ENCODE measurements at regions of chr4 and their contacts with region 1.

Region 1: DNA sequence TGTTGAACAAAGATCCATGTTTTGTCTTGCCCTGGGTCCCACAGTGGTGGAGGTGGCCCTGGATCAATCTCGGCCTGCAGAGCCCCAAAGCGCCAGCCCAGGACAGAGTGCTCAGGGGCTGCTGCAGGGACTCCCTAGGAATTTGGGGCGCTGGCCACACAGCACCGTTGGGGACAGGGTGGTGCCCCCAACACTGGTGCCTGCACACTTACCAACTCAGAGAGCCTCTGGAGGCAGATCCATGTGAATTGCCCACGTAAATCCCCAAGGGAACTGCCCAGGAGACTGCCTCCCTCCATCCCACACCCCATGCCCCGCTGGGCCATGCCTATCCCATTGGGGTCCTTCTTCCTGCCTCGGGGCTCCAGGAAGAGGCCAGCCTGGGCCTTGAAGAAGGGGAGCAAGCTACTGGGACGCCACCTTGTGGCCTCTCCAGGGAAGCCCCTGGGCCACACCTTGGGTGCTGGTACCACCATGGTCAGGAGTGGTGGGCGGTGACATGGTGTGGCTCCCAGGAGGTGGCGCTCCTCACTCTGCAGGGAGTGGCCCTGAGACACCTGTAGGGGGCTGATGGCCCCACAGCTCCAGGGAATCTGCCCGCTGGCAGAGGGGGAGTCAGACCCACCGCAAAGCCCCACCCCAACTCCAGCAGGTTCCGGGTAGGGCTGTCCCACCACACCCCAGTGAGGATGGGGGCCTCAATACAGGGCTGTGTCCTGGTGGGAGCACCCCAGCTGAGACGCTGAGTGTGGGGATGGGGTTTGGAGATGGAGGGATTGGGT is 22.8 kb downstream of the CFAP99 start:
- DNase-seq: peak; percentile 73
- H3K4me3 ChIP-seq: no peak overlapping the region
- H3K27ac ChIP-seq: no peak overlapping the region
- H3K4me1 ChIP-seq: no peaks in the 10 kb centered on the region
- H3K27me3 ChIP-seq: no peaks in the 10 kb centered on the region

Region 2: DNA sequence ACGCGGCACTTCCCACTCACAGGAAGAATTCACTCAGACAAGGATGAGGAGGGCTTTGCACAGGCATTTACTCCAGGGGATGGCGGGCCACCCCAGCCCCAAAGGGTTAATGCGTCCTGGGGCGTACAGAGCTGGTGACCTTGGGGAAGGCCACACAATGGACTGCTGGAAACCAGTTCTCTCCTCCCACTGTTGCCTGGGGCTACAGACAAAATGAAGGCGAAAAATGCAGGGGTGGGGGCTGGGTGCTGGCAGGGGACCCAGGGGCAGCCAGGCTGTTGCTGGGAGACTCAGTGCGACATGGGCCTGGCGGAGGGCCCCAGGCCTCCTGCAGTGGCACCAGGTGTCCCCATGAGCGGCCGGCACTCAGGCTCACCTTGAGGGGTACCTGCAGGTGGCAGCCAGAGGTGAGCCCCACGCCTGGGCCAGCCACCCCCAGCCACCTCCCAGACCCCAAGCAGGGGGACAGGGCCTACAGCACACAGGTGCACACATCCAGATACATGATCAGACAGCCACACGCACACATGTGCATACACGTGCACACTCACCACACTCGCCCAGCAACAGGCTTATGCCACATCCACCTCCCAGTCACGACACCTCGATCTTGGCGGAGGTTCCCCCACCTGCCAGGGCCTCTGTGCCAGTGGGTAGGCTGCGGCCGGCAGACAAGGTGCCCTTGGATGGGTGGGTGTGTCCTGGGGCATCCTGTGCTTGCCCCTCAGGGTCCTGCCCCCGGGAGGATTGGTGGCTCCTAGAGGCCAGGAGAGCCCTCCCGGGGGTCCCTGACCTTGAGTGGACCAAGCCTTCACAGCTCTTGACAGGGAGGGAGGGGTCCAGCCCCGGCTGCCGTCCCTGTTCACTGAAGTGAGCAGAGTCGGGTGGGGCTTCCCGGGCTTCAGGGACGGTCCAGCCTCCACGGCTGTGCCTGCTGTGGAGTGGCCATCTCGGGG is 369.4 kb before region 1 on chr4:
- in situ Hi-C with region 1: no loop called
- DNase-seq: no peak
- H3K4me3 ChIP-seq: no peak overlapping the region
- H3K27ac ChIP-seq: no peak overlapping the region
- H3K4me1 ChIP-seq: no peaks in the 10 kb centered on the region
- H3K27me3 ChIP-seq: no peaks in the 10 kb centered on the region

Region 3: DNA sequence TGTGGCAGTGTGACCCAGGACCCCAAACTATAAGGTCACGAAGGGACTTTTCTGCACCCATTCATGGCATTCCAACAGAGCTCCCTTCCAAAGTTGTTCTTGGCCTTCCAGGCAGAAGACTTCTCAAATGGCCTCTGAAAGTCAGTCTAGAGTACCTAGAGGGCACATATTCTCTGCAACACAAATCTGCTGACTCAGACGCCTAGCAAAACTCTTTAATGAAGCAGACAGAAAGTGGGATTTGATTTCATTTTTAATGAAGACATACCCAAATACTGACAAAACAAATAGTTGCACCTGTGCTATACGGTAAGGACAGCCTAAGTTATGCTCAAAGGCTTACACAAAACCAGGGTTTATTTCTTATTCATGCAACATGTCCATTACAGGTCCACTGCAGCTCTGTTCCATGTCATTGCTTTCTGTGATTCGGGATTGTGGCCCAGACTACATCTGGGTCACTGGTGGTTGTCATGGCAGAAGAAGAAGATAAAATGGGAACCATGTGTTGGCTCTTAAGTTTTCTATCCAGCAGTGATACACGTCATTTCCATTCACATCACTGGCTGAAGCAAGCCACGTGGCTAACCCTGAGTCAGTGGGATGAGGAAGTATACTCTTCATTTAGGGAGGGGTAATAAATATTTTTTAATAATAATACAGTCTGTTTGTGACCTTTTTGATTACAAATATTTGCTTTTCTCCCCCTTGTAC is 324.7 kb before region 1 on chr4:
- in situ Hi-C with region 1: no loop called
- DNase-seq: peak; percentile 22
- H3K4me3 ChIP-seq: no peak overlapping the region
- H3K27ac ChIP-seq: no peak overlapping the region
- H3K4me1 ChIP-seq: no peaks in the 10 kb centered on the region
- H3K27me3 ChIP-seq: no peaks in the 10 kb centered on the region

Region 4: GRCh38 chr4:2220016-2220630 is 221.5 kb before region 1 on chr4:
- in situ Hi-C with region 1: loop called (anchors 10 kb)
- DNase-seq: peak; percentile 85
- H3K4me3 ChIP-seq: no peak overlapping the region
- H3K27ac ChIP-seq: no peak overlapping the region
- H3K4me1 ChIP-seq: 0 out of 2 replicates have a peak, but pooled peaks cover 6% of the 10 kb centered on the region
- H3K27me3 ChIP-seq: no peaks in the 10 kb centered on the region

Region 5: GRCh38 chr4:2536193-2537010 is 94.8 kb after region 1 on chr4 and contains the start of gene FAM193A:
- in situ Hi-C with region 1: no loop called
- DNase-seq: peak; percentile 100
- H3K4me3 ChIP-seq: peak within 1 kb of the TSS; percentile 77
- H3K27ac ChIP-seq: peak within 1 kb of the TSS; percentile 80
- H3K4me1 ChIP-seq: peaks cover 12% of the 10 kb centered on the region; the same call in 1 of the 2 replicates
- H3K27me3 ChIP-seq: no peaks in the 10 kb centered on the region
- total RNA-seq, gene FAM193A: 19.0 TPM in 2 replicates

Region 6: GRCh38 chr4:2608291-2608690 is 166.7 kb after region 1 on chr4:
- in situ Hi-C with region 1: no loop called
- DNase-seq: no peak
- H3K4me3 ChIP-seq: no peak overlapping the region
- H3K27ac ChIP-seq: no peak overlapping the region
- H3K4me1 ChIP-seq: no peaks in the 10 kb centered on the region
- H3K27me3 ChIP-seq: no peaks in the 10 kb centered on the region